Dendritic cell treated with granulocyte-macrophage colony-stimulating factor and Interleukin-4, amounts not matched to agents 40 ng/mL and 50 ng/mL, for 4 days (primary cell): ENCODE measurements at regions of chr7 and their contacts with region 1.

Region 1: GRCh38 chr7:44847508-44847920 is 373 bp downstream of the H2AZ2 start:
- H3K4me3 Mint-ChIP-seq: peak overlapping the region; percentile 85
- H3K27ac Mint-ChIP-seq: peak overlapping the region; percentile 93
- H3K4me1 Mint-ChIP-seq: peaks cover 46% of the 10 kb centered on the region
- H3K27me3 Mint-ChIP-seq: no peaks in the 10 kb centered on the region

Region 2: DNA sequence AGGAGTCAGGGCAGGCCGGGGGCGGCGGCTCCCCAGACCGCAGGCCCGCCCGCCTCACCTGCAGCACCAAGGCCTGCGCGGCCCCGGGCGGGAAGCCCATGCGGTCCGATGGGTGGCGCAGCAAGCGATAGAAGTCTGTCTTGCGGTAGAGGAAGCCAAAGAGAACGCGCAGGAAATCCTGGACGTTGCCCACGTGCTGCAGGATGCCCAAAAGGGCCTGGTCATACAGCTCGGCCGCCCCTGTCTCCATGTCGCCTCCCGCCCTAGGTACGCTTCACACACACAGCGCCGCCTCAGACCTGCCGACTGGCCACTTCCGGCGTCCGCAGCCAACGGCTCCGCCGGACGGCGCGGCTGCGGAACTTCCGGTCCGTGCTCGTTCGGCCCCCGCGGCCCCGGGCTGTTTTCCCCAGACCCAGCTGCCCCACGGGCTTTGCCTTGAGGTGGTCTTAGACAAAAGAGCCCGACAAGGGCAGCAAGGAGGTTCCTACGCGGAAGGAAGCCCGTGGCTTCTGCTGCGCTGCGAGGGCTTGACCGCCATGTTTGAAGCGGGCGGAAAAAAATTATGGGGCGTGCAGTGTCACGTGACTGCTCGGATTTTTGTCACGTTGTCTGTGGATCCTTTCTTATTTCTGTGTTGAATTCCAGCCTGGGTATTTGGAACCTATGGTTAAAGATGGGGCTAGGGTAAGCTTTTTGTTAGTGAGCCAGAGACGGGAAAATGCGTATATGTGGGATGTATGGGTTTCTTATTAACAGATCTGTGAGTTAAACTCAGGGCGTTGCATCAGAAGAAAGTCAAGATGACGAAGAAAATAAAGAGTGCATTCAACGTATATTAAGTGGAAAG is 356.9 kb before region 1 on chr7 and contains the start of gene NUDCD3:
- intact Hi-C with region 1: loop called (anchors 5 kb)
- H3K4me3 Mint-ChIP-seq: peak within 1 kb of the TSS; percentile 95
- H3K27ac Mint-ChIP-seq: peak within 1 kb of the TSS; percentile 90
- H3K4me1 Mint-ChIP-seq: peaks cover 48% of the 10 kb centered on the region
- H3K27me3 Mint-ChIP-seq: peaks cover 4% of the 10 kb centered on the region

Region 3: DNA sequence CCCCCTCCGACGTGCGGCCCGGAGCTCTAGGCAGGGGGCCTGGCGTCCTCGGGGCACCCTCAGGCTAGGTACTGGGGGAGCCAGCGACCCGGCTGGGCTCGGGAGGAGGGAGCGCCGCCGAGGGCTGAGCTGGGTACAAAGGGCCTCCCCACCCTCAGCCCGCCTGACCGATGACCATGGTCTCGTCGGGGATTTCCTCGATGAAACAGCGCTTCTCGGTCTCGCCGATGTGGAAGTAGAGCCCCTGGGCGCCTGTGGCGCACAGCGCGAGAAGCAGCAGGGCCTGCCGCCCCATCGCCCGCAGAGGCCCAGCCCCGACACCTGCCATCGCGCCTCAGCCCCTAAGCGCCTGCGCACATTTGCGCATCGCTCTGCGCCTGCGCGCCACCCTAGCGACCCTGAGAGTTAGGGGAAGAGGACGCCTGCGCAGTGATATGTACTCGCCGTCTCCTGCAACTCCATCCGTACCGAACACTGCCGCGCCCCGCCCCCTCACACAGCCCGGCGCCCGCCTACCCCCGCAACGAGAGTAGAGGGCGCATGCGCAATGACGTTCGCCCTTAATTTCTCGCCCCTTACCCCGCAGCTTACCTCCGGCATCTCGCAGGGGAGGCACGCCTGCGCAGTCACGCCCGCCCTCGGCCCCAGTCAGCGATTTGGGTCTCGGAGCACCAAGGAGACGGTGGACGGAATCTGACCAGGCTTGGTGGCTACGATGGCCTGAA is 265.5 kb before region 1 on chr7 and contains the start of gene TMED4:
- intact Hi-C with region 1: loop called (anchors 2 kb)
- H3K4me3 Mint-ChIP-seq: peak within 1 kb of the TSS; percentile 90
- H3K27ac Mint-ChIP-seq: peak within 1 kb of the TSS; percentile 97
- H3K4me1 Mint-ChIP-seq: peaks cover 34% of the 10 kb centered on the region
- H3K27me3 Mint-ChIP-seq: peaks cover 1% of the 10 kb centered on the region

Region 4: DNA sequence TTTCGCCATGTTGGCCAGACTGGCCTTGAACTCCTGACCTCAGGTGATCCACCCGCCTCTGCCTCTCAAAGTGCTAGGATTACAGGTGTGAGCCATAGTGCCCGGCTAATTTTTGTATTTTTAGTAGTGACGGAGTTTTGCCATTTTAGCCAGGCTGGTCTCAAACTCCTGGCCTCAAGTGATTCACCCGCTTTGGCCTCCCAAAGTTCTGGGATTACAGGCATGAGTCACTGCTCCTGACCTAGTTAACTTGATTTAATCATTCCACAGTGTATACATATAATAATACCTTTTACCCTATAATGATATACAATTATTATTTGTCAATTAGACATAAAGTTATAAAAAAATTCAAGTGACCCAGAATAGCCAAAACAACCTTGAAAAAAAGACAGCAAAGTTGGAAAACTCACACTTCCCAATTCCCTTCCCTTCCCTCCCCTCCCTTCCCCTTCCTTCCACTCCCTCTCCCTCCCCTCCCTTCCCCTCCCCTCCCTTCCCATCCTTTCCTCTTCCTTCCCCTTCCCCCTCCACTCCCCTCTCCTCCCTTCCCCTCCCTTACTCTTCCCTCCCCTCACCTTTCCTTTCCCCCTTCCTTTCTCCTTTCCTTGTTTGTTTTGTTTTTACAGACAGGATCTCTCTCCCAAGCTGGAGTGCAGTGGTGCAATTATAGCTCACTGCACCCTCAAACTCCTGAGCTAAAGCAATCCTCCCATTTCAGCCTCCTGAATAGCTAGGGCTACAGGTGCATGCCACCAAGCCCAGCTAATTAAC is 113.6 kb before region 1 on chr7:
- intact Hi-C with region 1: no loop called
- H3K4me3 Mint-ChIP-seq: no peak overlapping the region
- H3K27ac Mint-ChIP-seq: peak overlapping the region; percentile 79
- H3K4me1 Mint-ChIP-seq: peaks cover 34% of the 10 kb centered on the region
- H3K27me3 Mint-ChIP-seq: no peaks in the 10 kb centered on the region

Region 5: GRCh38 chr7:44748045-44748947 is 99.2 kb before region 1 on chr7 and contains the start of gene ZMIZ2:
- intact Hi-C with region 1: loop called (anchors 10 kb)
- H3K4me3 Mint-ChIP-seq: peak within 1 kb of the TSS; percentile 91
- H3K27ac Mint-ChIP-seq: peak within 1 kb of the TSS; percentile 85
- H3K4me1 Mint-ChIP-seq: peaks cover 61% of the 10 kb centered on the region
- H3K27me3 Mint-ChIP-seq: no peaks in the 10 kb centered on the region

Region 6: DNA sequence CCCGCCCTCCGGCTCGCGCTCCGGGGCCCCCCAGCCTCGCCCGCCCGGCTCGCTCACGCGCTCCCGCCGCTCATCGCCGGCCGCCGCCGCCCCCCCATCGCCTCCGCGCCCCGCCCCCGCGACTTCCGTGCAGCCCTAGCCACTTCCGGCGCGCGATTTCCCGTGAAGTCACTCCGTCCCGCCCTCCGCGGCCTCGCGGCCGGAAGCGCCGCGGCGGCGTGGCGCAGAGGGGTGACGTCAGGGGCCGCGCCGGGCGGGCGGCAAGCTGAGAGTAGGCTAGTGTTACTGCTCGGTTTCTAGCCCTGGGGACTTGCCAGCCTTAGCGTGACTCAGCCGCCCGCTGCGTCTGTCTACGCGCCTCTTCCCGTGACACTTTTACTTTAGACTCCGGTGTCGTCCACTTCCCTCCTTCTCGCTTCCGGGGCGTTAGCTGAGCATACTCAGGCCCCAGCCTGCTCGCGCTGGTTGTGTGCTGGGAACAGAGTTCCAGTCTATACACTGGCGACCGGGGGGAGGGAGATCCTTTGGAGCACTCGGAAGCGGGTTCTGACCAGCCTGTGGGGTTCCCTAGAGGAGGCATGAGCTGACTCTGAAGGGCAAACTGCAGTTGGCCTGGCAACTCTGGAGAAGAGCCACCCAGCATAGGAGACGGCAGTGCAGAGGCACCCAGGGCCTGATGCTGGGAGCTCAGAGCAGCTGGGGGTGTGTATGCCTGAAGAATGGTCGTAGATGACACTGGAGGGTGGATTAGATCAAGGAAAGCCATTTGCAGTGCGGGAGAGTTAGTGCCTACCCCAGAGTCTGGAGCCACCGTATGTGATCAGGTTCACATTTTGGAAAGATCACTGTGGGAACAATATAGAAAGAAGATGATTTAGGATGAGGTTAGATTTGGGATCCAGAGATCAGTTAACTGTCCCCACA is 38.1 kb after region 1 on chr7 and contains the start of gene PURB:
- intact Hi-C with region 1: loop called (anchors 1 kb)
- H3K4me3 Mint-ChIP-seq: peak within 1 kb of the TSS; percentile 88
- H3K27ac Mint-ChIP-seq: peak within 1 kb of the TSS; percentile 99
- H3K4me1 Mint-ChIP-seq: peaks cover 49% of the 10 kb centered on the region
- H3K27me3 Mint-ChIP-seq: no peaks in the 10 kb centered on the region

Region 7: DNA sequence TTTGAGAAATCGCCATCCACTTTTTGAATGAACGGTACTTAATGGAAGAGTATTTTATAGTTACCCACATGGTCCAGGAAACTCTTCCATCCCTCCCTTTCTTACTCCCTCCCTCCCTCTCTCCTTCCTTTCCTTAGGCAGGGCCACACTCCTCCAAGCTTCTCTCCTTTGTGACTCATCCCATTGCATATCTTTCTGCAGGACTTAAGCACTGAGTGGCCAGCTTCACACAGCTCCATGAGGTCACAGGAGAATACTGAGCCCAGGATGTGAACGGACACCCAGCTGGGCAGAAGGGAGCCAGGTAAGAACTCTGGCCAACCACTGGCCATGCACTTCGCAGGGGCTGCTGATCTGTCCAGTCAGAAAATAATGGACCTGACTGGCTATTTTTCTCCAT is 537.0 kb after region 1 on chr7:
- intact Hi-C with region 1: no loop called
- H3K4me3 Mint-ChIP-seq: no peak overlapping the region
- H3K27ac Mint-ChIP-seq: no peak overlapping the region
- H3K4me1 Mint-ChIP-seq: no peaks in the 10 kb centered on the region
- H3K27me3 Mint-ChIP-seq: no peaks in the 10 kb centered on the region